A673 (cell line): ENCODE measurements at regions of chr11 and their contacts with region 1.

Region 1: DNA sequence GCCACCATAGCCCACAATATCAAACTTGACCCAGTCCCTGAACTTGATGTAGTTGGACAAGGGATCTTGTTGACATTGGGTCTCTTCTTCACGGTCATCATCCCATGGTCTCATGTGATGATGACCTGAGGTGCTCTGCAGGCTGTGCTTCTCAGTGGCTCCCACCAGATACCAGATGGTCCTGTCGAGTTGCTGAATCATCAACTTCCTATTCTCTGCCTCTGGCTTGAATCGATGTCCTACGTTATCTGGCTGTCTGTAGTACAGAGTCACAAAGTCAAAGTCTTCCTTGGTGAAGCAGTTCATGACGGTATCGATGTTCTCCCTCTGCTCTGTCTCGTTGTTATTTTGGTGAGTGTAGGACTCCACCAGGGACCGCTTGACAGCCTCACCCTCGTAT is 145.7 kb upstream of the ALDH3B2 start:
- DNase-seq: no peak
- H3K4me3 ChIP-seq: no peak overlapping the region
- H3K27ac ChIP-seq: no peak overlapping the region
- H3K4me1 ChIP-seq: no peaks in the 10 kb centered on the region
- H3K27me3 ChIP-seq: peaks cover 4% of the 10 kb centered on the region
- CTCF ChIP-seq: no peak

Region 2: GRCh38 chr11:66936311-66936711 is 883.8 kb before region 1 on chr11:
- CTCF ChIA-PET with region 1: no interaction called
- POLR2A ChIA-PET with region 1: interaction called, 14 read pairs
- intact Hi-C with region 1: no loop called
- DNase-seq: no peak
- H3K4me3 ChIP-seq: no peak overlapping the region
- H3K27ac ChIP-seq: no peak overlapping the region
- H3K4me1 ChIP-seq: no peaks in the 10 kb centered on the region
- H3K27me3 ChIP-seq: no peaks in the 10 kb centered on the region
- CTCF ChIP-seq: no peak

Region 3: GRCh38 chr11:67136156-67136555 is 683.9 kb before region 1 on chr11:
- CTCF ChIA-PET with region 1: no interaction called
- POLR2A ChIA-PET with region 1: no interaction called
- intact Hi-C with region 1: no loop called
- DNase-seq: no peak
- H3K4me3 ChIP-seq: no peak overlapping the region
- H3K27ac ChIP-seq: no peak overlapping the region
- H3K4me1 ChIP-seq: no peaks in the 10 kb centered on the region
- H3K27me3 ChIP-seq: no peaks in the 10 kb centered on the region
- CTCF ChIP-seq: no peak

Region 4: GRCh38 chr11:67321313-67321871 is 498.7 kb before region 1 on chr11:
- CTCF ChIA-PET with region 1: no interaction called
- POLR2A ChIA-PET with region 1: no interaction called
- intact Hi-C with region 1: no loop called
- DNase-seq: no peak
- H3K4me3 ChIP-seq: no peak overlapping the region
- H3K27ac ChIP-seq: no peak overlapping the region
- H3K4me1 ChIP-seq: no peaks in the 10 kb centered on the region
- H3K27me3 ChIP-seq: no peaks in the 10 kb centered on the region
- CTCF ChIP-seq: no peak

Region 5: DNA sequence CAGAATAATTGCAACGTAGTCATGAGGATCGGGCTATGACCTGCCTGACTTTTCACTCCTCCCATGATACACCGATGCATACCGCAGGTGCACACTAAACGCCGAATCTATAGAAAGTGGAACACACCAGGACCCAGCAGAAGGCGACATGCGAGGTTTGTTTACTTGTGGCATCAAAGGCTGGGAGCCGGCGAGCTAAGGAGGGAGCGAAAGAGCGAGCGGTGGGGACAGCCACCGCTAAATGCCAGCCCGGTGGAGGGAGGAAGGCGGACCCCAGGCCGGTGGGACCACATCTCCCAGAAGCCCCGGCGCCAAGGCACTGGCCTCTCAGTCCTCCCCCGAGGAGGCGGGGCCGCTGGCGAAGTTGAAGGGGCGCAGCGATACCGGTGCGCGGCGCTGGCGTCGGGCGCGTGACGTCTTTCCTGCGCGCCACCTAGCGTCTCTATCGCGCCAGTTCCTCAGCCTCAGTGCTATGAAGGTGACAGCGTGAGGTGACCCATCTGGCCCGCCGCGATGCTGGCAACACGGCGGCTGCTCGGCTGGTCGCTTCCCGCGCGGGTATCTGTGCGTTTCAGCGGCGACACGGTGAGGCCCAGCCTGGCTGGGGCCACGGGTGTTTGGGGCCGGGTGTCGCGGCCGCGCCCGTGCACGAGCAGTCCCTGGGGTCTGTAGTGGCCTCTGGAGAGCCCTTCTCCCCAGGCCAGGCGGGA is 213.4 kb before region 1 on chr11 and contains the start of gene NDUFV1:
- CTCF ChIA-PET with region 1: no interaction called
- POLR2A ChIA-PET with region 1: no interaction called
- intact Hi-C with region 1: no loop called
- DNase-seq: peak; percentile 99
- H3K4me3 ChIP-seq: peak within 1 kb of the TSS; percentile 79
- H3K27ac ChIP-seq: peak within 1 kb of the TSS; percentile 74
- H3K4me1 ChIP-seq: peaks cover 6% of the 10 kb centered on the region
- H3K27me3 ChIP-seq: no peaks in the 10 kb centered on the region
- CTCF ChIP-seq: peak; percentile 71
- total RNA-seq, gene NDUFV1: 250 and 275 TPM in 2 replicates

Region 6: DNA sequence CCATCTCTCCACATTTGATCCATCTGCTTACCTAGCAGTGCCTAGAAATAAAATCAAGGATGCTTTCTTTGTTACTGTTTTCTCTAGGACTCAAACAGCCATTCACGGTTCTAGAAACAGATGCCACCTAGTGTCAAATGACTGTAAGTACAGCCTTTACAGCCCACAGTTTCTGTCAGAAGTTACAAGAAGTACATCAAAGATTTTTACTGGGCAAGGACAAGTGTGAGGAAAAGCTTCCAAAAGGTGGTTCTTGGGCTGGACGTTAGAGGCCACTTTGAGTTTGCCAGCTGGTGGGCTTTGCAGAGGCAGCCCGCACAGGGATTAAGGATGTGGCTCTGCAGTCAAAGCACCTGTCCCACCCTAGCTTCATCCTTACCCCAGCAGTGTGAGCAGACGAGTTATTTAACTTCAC is 386.1 kb after region 1 on chr11:
- CTCF ChIA-PET with region 1: no interaction called
- POLR2A ChIA-PET with region 1: no interaction called
- intact Hi-C with region 1: no loop called
- DNase-seq: peak; percentile 82
- H3K4me3 ChIP-seq: no peak overlapping the region
- H3K27ac ChIP-seq: no peak overlapping the region
- H3K4me1 ChIP-seq: peaks cover 10% of the 10 kb centered on the region
- H3K27me3 ChIP-seq: no peaks in the 10 kb centered on the region
- CTCF ChIP-seq: peak; percentile 92